Dorsolateral prefrontal cortex (tissue), 120 donors: ENCODE measurements at regions of chr3 and their contacts with region 1.

Region 1: DNA sequence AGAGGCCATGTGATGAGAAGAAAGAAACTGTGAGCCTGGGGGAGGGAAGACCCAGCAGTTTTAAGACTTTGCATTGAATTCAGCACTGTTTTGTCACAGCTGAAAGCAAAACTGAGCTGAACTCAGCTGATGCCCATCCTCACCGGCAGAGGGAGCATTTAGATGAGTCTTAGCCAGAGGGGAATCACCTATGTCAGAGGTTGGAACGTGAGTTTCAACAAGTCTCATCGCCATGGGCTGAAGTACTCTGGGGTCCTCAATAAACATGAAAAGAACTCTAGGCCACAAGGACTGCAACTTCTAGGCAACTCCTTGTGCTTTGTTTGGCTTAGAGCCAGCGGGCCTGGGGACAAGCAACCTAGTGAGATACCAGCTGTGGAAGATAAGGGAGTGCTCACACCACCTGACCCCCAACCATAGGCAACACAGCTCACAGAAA is 324.5 kb downstream of the TBL1XR1 start:
- DNase-seq: peak in 1 of 10 donors; percentile 31
- H3K4me3 ChIP-seq: no peak overlapping the region
- H3K27ac ChIP-seq: no peak overlapping the region
- H3K27me3 ChIP-seq: no peaks in the 10 kb centered on the region
- CTCF ChIP-seq: peak; percentile 10 to 79 (median 62)

Region 2: DNA sequence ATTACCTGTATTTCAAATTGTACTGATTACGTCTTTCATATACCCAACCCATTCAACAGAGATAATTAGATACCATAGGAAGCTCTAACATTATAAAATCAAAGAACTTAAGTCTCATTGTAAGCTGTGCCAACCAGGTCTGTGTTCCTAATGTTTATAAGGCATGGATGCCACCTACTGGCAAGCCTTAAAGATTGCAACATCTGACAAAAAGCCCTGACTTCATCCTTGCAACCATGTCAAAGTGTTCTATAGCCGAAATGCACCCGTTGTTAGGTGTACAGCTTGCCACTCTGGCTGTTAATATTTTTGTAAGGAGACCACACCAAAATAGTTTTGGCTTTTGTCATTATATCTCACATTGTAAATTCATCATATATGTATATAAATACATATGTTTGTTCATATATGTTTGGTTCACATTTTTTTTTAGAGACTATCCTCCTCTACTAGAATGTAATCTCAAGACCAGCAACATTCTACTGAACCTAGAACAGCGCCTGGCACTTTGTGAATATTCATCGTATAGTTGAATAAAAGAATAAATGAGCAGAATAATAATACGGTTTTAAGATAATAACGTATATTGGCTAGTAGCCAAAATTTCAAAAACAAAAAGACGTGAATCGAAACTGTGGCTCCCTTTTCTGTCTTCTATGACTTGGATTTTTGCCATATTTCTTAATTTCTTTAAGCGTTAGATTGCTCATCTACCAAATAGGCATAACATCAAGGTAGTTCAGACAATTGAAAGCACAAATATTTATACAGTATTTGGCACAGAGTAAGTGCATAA is 66.4 kb after region 1 on chr3:
- intact Hi-C with region 1: loop called in 1 of 2 experiments (anchors 2 kb)
- DNase-seq: peak in 2 of 10 donors; percentile 44 to 47
- H3K4me3 ChIP-seq: peak overlapping the region in 24 of 59 donors; percentile 0 to 40 (median 16)
- H3K27ac ChIP-seq: no peak overlapping the region
- H3K27me3 ChIP-seq: no peaks in the 10 kb centered on the region
- CTCF ChIP-seq: peak; percentile 69 to 94 (median 84)

Region 3: GRCh38 chr3:176987901-176988650 is 115.3 kb after region 1 on chr3:
- intact Hi-C with region 1: no loop called
- DNase-seq: no peak
- H3K4me3 ChIP-seq: no peak overlapping the region
- H3K27ac ChIP-seq: no peak overlapping the region
- H3K27me3 ChIP-seq: no peaks in the 10 kb centered on the region
- CTCF ChIP-seq: no peak